Caco-2 (cell line): ENCODE measurements at regions of chr17 and their contacts with region 1.

Region 1: DNA sequence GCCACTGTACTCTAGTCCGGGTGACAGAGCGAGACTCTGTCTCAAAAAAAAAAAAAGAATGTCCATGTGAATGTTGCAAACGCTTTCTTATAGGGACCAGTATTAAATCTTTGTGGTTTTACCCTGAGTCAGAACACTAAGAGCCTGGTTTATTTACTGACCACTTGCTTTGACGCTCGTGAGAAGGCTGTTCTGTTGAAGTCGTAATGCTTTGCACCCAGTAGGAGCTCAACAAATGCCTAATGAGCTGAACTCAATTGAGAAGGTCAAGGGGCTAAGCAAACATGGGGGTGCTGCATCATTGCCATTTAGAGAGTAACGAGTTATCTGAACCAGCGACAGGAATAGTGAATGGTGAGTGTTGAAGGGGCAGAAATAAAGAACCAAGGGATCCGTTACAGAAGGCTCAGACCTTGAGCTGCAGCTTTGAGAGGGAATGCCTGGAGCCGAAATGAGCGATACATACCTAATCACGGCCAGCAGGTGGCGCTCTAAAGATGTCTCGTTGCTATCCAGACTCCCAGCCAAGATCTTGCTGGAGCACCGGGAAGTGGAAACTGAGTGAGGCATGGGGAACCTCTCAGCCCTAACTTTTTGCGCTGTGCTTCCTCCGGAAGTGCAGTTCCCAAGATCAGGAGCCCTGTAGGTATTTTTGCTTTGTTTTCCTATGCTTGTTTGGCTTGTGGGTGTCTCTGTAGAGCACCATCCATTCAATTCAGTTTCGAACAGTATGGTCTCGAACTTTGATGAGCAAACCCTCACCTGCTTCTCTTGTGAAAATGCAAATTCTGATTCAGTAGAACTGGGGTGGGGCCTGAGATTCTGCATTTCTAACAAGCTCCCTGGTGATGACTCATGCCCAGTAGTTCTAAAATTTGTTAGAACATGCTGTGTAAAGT is 12.6 kb upstream of the RNF222 start:
- DNase-seq: peak; percentile 77
- H3K4me3 ChIP-seq: no peak overlapping the region
- H3K4me3 Mint-ChIP-seq: no peak overlapping the region
- H3K27ac Mint-ChIP-seq: no peak overlapping the region
- H3K4me1 ChIP-seq: no peaks in the 10 kb centered on the region
- H3K4me1 Mint-ChIP-seq: no peaks in the 10 kb centered on the region
- H3K27me3 ChIP-seq: no peaks in the 10 kb centered on the region
- H3K27me3 Mint-ChIP-seq: no peaks in the 10 kb centered on the region
- CTCF ChIP-seq: peak; percentile 58

Region 2: DNA sequence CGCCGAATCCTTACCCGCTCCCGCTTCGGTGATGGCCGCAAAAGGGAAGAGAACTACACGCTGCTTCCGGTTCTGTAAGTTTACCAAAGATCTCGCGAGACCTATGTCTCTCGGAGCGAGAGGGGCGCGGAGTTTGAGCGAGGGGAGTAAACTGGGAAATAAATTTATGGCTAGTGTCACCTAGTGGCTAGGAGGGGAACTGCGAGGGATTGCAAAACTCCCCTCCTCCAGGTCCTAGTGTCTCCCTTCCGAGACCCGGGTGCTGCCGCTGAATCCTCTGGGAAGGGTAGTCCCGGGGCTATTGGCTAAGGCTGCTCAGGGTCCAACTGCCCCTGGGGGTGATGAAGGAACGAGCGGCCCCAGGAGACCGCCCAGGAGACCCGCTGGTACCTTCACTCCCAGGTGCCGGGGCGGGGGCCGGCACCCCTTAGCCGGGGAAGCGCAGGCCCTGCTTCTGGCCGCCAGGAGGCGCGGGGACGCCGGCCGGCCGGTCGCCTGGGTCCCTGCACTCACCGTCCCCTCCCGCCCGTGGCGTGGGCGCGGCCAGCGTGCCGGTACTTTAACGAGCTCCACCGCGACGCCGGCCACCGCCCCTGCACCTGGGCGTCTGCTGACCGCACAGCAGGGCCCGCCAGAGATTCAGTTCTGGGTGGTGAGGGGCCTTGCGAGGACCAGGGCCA is 26.9 kb before region 1 on chr17 and contains the start of gene RPL26:
- CTCF ChIA-PET with region 1: interaction called, 13 read pairs
- POLR2A ChIA-PET with region 1: interaction called, 5 read pairs
- intact Hi-C with region 1: no loop called
- DNase-seq: peak; percentile 90 to 94
- H3K4me3 ChIP-seq: peak within 1 kb of the TSS; percentile 74
- H3K4me3 Mint-ChIP-seq: peak within 1 kb of the TSS; percentile 91
- H3K27ac Mint-ChIP-seq: peak within 1 kb of the TSS; percentile 97
- H3K4me1 ChIP-seq: peaks cover 12% of the 10 kb centered on the region
- H3K4me1 Mint-ChIP-seq: no peaks in the 10 kb centered on the region
- H3K27me3 ChIP-seq: no peaks in the 10 kb centered on the region
- H3K27me3 Mint-ChIP-seq: no peaks in the 10 kb centered on the region
- CTCF ChIP-seq: peak; percentile 72 to 87
- total RNA-seq, gene RPL26: 998 and 999 TPM in 2 replicates

Region 3: GRCh38 chr17:8393420-8394241 is 16.6 kb before region 1 on chr17:
- CTCF ChIA-PET with region 1: no interaction called
- POLR2A ChIA-PET with region 1: no interaction called
- intact Hi-C with region 1: no loop called
- DNase-seq: no peak
- H3K4me3 ChIP-seq: no peak overlapping the region
- H3K4me3 Mint-ChIP-seq: no peak overlapping the region
- H3K27ac Mint-ChIP-seq: no peak overlapping the region
- H3K4me1 ChIP-seq: no peaks in the 10 kb centered on the region
- H3K4me1 Mint-ChIP-seq: peaks cover 6% of the 10 kb centered on the region
- H3K27me3 ChIP-seq: no peaks in the 10 kb centered on the region
- H3K27me3 Mint-ChIP-seq: peaks cover 6% of the 10 kb centered on the region
- CTCF ChIP-seq: no peak

Region 4: DNA sequence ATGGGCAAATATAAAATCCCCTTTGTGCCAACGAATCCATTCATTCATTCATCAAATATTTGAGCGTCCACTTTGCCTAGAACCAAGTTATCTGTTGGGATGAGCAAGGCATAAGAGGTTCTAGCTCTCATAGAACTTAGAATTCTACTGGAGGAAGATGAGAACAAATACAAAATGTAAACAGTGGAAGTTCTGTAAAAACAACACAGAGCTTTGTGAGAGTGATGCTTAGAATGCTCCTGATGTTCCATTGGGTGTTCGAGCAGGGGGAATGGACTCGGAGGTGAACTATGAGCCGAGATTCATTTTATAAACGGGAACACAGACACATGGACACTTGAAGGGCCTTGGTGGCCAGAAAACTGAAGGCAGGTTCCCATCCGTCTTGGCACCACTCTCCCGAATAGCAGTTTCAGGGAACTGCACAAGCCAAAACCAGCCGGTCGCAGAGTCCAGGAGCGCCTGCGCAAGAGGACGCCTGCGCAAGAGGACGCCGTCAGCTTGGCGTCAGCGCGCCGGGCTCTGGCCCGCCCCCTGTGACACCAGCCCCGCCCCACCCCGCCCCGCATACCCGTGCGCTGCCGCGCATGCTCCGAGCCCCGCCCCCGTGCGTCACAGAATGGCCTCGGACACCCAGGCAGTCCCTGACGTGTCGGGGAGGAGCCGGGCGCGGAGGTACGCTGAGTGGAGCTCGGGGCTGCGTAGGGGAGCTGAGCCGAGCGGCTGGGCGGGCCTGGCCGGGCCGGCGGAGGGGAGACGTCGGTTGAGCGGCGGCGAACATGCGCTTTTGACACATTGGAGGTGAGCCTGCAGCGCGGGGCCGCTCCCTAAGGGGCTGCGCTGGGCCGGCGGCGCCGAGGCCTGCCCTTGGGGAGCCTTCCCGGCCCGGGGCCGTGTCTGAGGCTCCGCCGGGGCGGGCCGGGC is 25.3 kb after region 1 on chr17 and contains the start of gene NDEL1:
- CTCF ChIA-PET with region 1: interaction called, 10 read pairs
- POLR2A ChIA-PET with region 1: no interaction called
- intact Hi-C with region 1: no loop called
- DNase-seq: peak; percentile 94 to 95
- H3K4me3 ChIP-seq: peak within 1 kb of the TSS; percentile 84
- H3K4me3 Mint-ChIP-seq: peak within 1 kb of the TSS; percentile 85
- H3K27ac Mint-ChIP-seq: peak within 1 kb of the TSS; percentile 86
- H3K4me1 ChIP-seq: no peaks in the 10 kb centered on the region
- H3K4me1 Mint-ChIP-seq: no peaks in the 10 kb centered on the region
- H3K27me3 ChIP-seq: no peaks in the 10 kb centered on the region
- H3K27me3 Mint-ChIP-seq: no peaks in the 10 kb centered on the region
- CTCF ChIP-seq: no peak
- total RNA-seq, gene NDEL1: 32.2 and 32.3 TPM in 2 replicates

Region 5: DNA sequence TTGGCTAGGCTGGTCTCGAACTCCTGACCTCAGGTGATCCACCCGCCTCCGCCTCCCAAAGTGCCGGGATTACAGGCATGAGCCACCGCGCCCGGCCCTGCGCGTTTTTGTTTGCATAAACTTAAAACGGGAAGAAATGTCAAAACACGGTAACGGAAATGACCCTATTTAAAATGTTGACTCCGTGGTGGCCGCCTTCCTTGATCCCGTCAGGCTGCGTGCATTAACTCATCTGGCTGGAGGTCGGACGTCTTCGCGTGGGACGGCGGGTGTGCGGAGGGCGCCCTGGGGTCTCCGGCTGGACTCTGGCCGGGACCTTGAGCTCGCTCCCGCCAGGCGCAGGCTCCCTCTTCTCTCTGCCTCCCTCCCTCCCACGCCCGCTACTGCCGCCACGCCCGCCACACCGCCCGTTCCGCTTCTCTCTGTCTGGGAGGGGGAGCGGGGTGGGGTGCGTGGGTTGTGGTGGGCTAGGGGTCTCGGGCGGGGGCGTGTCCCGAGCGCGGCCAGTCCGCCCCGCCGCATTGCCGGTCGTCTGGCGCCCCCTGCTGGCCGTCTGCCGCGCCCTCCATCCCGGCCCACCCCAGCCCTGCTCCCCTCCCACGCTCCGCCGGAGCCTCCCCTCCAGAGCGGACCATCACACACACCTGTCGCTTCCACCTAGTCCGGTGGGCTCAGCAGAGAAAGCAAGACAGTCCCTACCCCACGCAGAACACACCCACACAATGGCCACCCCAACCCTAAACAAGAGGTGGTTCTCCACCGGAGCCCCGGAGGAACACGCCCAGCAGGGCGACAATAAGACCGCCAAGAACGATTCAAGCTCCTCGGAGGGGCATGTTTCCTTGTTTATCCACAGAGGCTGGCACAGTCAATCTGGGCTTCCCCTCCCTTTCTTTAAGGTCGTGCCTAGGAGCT is 335.6 kb after region 1 on chr17:
- CTCF ChIA-PET with region 1: interaction called, 4 read pairs
- POLR2A ChIA-PET with region 1: no interaction called
- intact Hi-C with region 1: loop called (anchors 10 kb)
- DNase-seq: peak in 1 of 2 experiments; percentile 61
- H3K4me3 ChIP-seq: peak overlapping the region; percentile 47
- H3K4me3 Mint-ChIP-seq: peak overlapping the region; percentile 59
- H3K27ac Mint-ChIP-seq: no peak overlapping the region
- H3K4me1 ChIP-seq: no peaks in the 10 kb centered on the region
- H3K4me1 Mint-ChIP-seq: no peaks in the 10 kb centered on the region
- H3K27me3 ChIP-seq: no peaks in the 10 kb centered on the region; the same call in 1 of the 2 replicates
- H3K27me3 Mint-ChIP-seq: no peaks in the 10 kb centered on the region
- CTCF ChIP-seq: peak; percentile 51 to 75